Activated T-helper 2 cell treated with anti-CD3 and anti-CD28 coated beads, Interferon-gamma antibody, Interleukin-2, Interleukin-4, amounts not matched to agents 10 μg/mL and 5 μg/mL and 100 μg/mL, durations not matched to agents 14 hours and 24 hours and 36 hours (primary cell): ENCODE measurements at regions of chr10 and their contacts with region 1.

Region 1: DNA sequence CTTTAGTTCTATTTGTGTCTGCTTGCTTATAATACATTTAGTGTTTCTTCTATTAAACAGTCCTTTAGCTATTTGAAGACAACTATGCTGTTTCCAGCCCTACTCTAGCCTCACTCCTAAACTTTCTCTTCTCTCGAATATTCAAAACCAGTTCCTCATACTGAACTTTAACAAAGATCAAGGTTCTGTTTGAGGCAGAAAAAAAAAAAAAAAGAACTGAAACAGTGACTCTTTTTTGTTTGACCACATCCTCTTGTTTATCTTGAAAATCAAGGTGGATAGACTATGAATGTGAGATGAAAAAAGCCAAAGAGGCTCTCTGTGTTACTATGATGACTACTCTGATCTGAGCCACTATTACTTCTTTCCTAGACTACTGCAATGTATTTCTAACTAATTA is 154.3 kb downstream of the ZNF365 start:
- DNase-seq: no peak
- H3K4me3 Mint-ChIP-seq: peak overlapping the region; percentile 1
- H3K27ac Mint-ChIP-seq: peak overlapping the region; percentile 23
- H3K4me1 Mint-ChIP-seq: peaks cover 33% of the 10 kb centered on the region
- H3K27me3 Mint-ChIP-seq: peaks cover 14% of the 10 kb centered on the region

Region 2: DNA sequence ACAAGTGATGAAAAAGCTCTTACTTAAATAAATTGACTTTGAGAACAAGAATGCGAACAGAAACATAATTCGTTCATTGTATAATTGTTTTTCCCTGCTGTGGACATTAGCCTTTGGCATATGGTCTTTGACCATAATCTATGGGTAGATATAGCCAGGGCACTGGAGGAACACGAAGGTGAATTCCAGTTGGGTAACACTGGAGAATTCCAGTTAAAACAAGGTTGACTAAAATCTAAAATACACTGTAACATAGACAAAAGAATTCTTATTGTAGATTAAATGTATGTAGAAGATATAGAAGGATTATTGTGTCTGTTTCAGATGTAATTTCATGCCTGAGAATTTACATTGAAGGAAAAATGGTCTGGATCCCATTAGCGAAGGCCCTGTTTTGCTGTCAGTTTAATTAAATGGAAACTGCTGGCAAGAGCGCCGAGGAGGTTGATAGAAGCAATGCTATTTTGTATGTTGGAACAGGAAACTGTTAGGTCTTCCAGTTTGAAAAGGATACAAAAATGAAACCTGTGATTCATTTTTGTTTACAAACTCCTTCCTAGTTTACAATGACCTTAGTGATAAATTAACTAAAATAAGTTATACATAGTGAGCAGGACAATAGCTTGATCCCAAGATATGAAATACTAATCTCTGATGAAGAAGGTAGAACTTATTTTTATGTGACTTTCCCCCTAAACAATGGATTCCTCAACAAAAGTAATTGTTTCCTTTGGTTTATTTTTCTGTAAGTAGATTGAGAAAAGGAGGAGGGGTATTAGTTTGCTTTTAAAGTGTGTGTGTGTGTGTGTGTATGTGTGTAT is 558.0 kb before region 1 on chr10:
- intact Hi-C with region 1: no loop called
- DNase-seq: no peak
- H3K4me3 Mint-ChIP-seq: no peak overlapping the region
- H3K27ac Mint-ChIP-seq: no peak overlapping the region
- H3K4me1 Mint-ChIP-seq: peaks cover 64% of the 10 kb centered on the region
- H3K27me3 Mint-ChIP-seq: no peaks in the 10 kb centered on the region

Region 3: DNA sequence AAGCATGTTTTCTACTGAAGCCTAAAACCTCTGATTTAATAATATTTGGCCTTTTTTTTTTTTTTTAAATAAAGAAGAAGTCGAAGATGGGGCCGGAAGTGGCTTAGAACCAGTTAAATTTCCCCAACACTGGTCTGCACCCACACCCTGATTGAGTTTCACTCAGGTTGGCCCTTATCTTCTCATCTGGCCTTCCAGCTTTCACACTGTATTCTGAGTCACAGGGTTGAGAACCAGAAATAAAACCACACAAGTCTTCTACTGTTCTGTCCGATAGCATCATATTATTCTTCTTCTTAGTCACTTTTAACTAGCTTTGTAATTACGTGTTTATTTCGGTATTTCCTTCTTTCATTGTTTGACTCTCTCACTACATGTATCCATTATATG is 144.4 kb before region 1 on chr10:
- intact Hi-C with region 1: loop called (anchors 1 kb)
- DNase-seq: peak; percentile 55
- H3K4me3 Mint-ChIP-seq: no peak overlapping the region
- H3K27ac Mint-ChIP-seq: peak overlapping the region; percentile 60
- H3K4me1 Mint-ChIP-seq: peaks cover 27% of the 10 kb centered on the region
- H3K27me3 Mint-ChIP-seq: peaks cover 54% of the 10 kb centered on the region

Region 4: DNA sequence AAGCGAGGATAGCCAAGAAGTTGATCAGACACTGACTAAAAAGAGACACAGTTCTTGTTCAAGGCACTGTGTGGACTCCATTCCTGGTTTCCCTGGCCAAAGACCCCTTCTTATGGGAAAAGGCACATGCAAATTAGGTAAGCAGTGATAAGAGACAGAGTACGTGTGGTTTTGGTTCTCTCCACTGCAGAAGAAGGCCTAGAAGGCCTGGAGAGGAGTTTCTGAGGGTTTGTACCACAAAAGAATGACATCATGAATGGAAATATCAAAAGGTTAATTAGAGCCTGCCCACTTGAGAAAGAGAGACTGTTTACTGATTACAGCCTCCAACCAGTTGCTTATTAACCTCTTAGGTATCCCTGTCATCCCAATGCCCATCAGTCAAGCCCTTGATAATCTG is 16.8 kb before region 1 on chr10:
- intact Hi-C with region 1: loop called (anchors 2 kb)
- DNase-seq: no peak
- H3K4me3 Mint-ChIP-seq: no peak overlapping the region
- H3K27ac Mint-ChIP-seq: no peak overlapping the region
- H3K4me1 Mint-ChIP-seq: peaks cover 17% of the 10 kb centered on the region
- H3K27me3 Mint-ChIP-seq: peaks cover 28% of the 10 kb centered on the region